ENCODE measurements at regions of chr19 and their contacts with region 1.

Region 1: DNA sequence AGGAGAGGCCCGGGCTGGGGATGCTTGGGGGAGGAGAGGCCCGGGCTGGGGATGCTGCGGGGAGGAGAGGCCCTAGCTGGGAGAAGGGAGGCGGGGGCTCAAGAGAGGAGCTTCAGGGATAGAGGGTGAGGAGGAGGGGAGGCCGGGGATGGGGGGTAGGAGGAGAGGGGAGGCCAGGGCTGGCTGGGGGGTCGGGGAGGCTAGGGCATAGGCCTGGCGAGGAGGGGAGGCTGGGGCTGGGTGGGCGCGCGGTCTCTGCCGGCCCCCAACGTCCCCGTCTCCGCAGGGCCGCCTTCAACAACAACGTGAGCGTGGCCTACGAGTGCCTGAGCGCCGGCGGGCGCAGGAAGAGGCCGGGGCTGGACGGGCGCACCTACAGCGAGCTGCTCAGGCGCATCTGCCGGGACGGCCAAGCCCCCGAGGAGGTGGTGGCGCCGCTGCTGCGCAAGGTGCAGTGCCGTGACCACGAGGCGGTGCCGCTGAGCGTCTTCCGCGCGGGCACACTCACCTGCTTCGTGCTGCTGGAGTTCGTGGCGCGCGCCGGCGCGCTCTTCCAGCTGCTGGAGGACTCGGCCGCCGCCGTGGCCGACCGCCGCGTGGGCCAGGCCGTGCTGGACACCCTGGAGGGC is 11.4 kb downstream of the TPGS1 start:
- DNase-seq: peak; percentile 79
- ATAC-seq: peak; percentile 87
- H3K4me3 Mint-ChIP-seq: no peak overlapping the region
- H3K27ac Mint-ChIP-seq: no peak overlapping the region
- H3K4me1 Mint-ChIP-seq: peaks cover 3% of the 10 kb centered on the region
- H3K27me3 Mint-ChIP-seq: peaks cover 33% of the 10 kb centered on the region
- CTCF ChIP-seq: no peak

Region 2: GRCh38 chr19:531009-531752 is 12.5 kb after region 1 on chr19:
- CTCF ChIA-PET with region 1: interaction called, 26 read pairs
- POLR2A ChIA-PET with region 1: interaction called, 4 read pairs
- DNase-seq: peak; percentile 82
- ATAC-seq: peak; percentile 79
- H3K4me3 Mint-ChIP-seq: peak overlapping the region; percentile 76
- H3K27ac Mint-ChIP-seq: 0 out of 2 replicates have a peak overlapping the region, but pooled peaks have one; percentile 70
- H3K4me1 Mint-ChIP-seq: peaks cover 10% of the 10 kb centered on the region
- H3K27me3 Mint-ChIP-seq: peaks cover 9% of the 10 kb centered on the region
- CTCF ChIP-seq: no peak